GM10248 (cell line): ENCODE measurements at regions of chr3 and their contacts with region 1.

Region 1: DNA sequence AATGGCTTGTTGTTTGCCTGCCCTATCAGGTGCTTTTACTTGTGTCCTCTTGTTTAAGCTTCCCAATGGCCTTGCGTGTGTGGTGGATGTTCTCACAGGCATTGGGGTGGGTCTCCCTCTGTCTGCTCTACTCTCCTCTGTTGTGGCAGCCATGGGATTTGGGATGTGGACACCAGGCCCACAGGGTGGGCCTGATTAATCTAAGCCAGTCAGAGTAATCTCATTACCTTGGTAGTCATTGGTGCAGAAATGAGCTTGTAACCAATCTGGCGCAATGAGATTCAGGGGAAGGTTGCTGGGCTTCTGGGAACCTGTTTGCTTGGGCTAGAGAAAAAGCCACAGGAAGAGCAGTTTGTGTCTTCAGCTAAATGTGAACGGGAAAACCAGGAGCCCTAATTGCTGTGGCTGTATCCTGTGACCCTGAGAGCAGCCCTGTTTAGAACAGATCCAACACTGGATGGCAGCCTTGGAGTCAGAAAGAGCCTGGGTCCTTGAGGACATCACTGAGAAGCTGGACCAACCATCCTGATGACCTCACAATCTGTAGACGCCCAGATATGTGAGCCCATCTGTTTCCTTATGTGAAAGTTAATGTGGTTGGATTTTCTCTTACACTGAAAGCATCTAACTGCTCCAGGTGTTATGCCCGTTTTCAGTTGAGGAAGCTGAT is 157.3 kb upstream of the UBE2E1 start:
- DNase-seq: no peak
- CTCF ChIP-seq: no peak

Region 2: DNA sequence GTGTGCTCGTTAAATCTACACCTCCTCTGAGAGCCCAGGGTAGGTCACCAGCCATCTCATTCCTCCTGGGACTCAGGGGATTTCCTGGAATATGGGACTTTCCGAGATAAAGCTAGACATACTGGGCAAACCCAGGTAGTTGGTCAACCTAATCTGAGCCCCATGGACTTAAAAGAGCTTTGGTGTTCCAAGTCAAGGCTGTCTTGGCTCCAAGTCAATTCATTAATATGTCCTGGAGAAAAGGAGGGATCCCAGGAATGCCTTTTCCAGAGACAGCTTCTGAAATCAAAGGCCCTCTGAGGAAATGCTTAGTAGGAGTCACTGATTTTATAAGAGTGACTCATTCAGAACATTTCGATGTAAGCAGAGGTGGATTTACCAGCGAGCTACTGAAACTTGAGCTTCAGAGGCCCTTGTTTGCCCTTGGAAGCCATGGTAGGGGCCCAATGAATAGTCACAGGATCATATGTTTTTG is 20.0 kb after region 1 on chr3:
- CTCF ChIA-PET with region 1: interaction called, 10 read pairs
- POLR2A ChIA-PET with region 1: no interaction called
- DNase-seq: no peak
- CTCF ChIP-seq: no peak